ENCODE measurements at regions of chr7 and their contacts with region 1.

Region 1: DNA sequence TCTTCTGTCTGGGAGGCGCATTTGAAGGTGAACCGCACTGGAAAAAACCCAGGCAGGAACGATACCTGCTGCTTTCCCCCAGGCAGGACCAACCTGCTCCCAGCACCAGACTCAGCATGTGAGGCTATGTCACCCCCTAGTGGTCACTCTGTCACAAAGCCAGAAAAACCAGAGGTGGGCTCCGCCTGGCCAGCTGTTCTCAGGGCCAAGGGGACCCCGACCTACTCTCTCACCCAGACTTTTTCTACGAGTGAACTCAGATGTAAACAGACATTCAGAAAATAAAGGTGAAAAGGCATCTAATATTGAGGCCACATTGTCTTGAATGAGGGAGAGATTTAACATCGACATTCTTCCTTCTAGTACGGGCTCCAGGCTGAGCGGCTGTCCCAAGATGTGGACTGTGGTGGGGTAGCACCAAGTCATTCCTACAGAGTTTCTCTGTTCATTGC is 117.3 kb downstream of the PRKAG2 start:
- DNase-seq: peak in 6 of 10 donors; percentile 44 to 70 (median 52)
- H3K4me3 ChIP-seq: no peak overlapping the region
- H3K27ac ChIP-seq: peak overlapping the region in 8 of 59 donors; percentile 4 to 46 (median 33)
- H3K27me3 ChIP-seq: peaks cover 0 to 12% (median 0%) of the 10 kb centered on the region in 45 donors
- CTCF ChIP-seq: peak; percentile 69 to 94 (median 86)

Region 2: GRCh38 chr7:151315038-151315655 is 444.5 kb before region 1 on chr7:
- intact Hi-C with region 1: loop called in 1 of 2 experiments (anchors 5 kb)
- DNase-seq: peak; percentile 33 to 80 (median 63)
- H3K4me3 ChIP-seq: peak overlapping the region in 12 of 59 donors; percentile 3 to 35 (median 16)
- H3K27ac ChIP-seq: no peak overlapping the region
- H3K27me3 ChIP-seq: no peaks in the 10 kb centered on the region
- CTCF ChIP-seq: peak; percentile 70 to 96 (median 90)

Region 3: DNA sequence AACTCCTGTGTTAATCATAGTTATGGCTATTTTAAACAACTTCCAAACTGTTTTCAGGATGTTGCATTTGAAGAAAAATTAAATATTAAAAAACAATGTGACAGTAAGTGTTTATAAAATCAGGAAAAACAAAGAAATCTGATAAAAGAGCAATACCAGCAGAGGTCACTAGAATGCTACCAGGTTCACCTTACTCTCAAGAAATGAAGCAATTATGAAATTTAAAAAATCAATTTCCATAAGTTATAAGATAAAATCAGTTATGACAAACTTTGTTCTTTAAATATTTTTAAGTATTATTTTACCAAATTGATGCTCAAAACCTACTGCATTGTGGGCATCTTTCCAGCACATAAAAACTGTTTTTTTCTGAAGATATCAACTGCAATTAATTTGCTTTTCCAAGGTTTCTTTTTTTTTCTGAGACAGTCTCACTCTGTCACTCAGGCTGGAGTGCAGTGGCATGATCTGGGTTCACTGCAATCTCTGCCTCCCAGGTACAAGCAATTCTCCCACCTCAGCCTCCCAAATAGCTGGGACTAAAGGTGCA is 189.2 kb before region 1 on chr7:
- intact Hi-C with region 1: loop called in 1 of 2 experiments (anchors 5 kb)
- DNase-seq: no peak
- H3K4me3 ChIP-seq: no peak overlapping the region
- H3K27ac ChIP-seq: no peak overlapping the region
- H3K27me3 ChIP-seq: no peaks in the 10 kb centered on the region
- CTCF ChIP-seq: peak in 55 of 56 donors; percentile 17 to 74 (median 49)

Region 4: GRCh38 chr7:151631968-151632749 is 127.5 kb before region 1 on chr7:
- intact Hi-C with region 1: loop called (anchors 5 kb)
- DNase-seq: peak; percentile 47 to 85 (median 70)
- H3K4me3 ChIP-seq: peak overlapping the region; percentile 49 to 86 (median 74)
- H3K27ac ChIP-seq: peak overlapping the region; percentile 62 to 95 (median 89)
- H3K27me3 ChIP-seq: no peaks in the 10 kb centered on the region
- CTCF ChIP-seq: peak in 34 of 56 donors; percentile 9 to 64 (median 41)

Region 5: GRCh38 chr7:152189061-152189460 is 429.4 kb after region 1 on chr7:
- intact Hi-C with region 1: no loop called
- DNase-seq: no peak
- H3K4me3 ChIP-seq: no peak overlapping the region
- H3K27ac ChIP-seq: no peak overlapping the region
- H3K27me3 ChIP-seq: no peaks in the 10 kb centered on the region
- CTCF ChIP-seq: no peak

Measured in dorsolateral prefrontal cortex (tissue), 120 donors.